Activated CD8-positive, alpha-beta T cell treated with anti-CD3 and anti-CD28 coated beads, Interleukin-2, amount 10 ng/mL, durations not matched to agents 7 days and 5 days (primary cell): ENCODE measurements at regions of chr20 and their contacts with region 1.

Region 1: DNA sequence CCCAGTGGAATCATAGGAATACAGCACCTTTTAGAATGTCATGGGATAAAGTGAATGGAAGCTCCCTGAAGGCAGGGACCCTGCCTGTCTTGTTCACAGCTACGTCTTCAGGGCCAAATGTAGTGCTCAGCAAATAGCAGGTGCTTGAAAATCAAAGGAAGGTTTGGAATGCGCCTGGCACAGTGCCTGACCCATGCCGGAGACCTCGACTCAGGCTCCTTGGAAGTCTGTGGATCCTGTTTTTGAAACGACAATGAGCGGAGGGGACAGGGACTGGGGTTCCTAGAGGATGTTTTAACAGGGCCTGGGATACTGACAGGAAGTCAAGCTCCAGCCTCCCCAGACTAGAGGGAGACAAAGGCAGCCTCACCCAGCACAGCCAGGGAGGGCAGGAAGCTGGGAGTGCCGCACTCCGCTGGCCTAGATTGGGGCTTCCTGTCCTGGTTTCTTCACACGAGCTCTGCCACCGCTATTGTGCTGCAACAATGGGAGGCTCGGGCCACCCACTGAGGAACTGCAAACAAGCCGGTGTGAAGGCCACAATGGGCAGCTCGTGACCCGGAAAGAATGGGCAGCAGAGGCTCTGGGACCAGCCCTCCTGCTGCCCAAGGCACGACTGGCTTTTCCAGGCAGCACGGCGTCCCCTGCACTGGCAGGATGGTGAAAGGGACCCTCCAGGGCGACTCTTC is 76.7 kb downstream of the PREX1 start:
- DNase-seq: peak; percentile 70
- ATAC-seq: peak; percentile 83
- H3K4me3 Mint-ChIP-seq: peak overlapping the region; percentile 42
- H3K27ac Mint-ChIP-seq: peak overlapping the region; percentile 87
- H3K4me1 Mint-ChIP-seq: peaks cover 78% of the 10 kb centered on the region
- H3K27me3 Mint-ChIP-seq: no peaks in the 10 kb centered on the region

Region 2: GRCh38 chr20:48738399-48739304 is 12.4 kb before region 1 on chr20:
- CTCF ChIA-PET with region 1: interaction called, 7 read pairs
- POLR2A ChIA-PET with region 1: interaction called, 19 read pairs
- DNase-seq: peak; percentile 91
- ATAC-seq: peak; percentile 87
- H3K4me3 Mint-ChIP-seq: peak overlapping the region; percentile 45
- H3K27ac Mint-ChIP-seq: peak overlapping the region; percentile 89
- H3K4me1 Mint-ChIP-seq: peaks cover 83% of the 10 kb centered on the region
- H3K27me3 Mint-ChIP-seq: no peaks in the 10 kb centered on the region

Region 3: DNA sequence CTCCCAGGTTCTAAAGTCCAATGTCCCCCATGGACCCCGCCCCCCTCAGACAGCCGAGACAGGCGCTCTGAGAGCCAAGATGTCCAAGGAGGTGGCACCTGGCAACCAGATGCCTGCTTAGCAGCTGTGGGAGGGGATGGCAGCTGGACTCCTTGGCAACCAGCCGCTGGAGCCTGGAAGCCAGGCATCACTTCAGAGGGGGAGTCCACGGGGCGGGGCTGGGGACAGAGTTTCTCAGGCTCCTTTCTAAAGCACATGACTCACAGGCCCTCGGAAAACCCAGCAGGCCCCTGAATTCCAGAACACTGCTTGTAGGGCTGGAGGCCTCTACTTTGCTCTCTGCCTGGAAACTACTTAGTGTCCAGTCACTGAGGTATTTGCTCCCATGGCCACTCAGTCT is 25.2 kb after region 1 on chr20:
- CTCF ChIA-PET with region 1: no interaction called
- POLR2A ChIA-PET with region 1: no interaction called
- DNase-seq: no peak
- ATAC-seq: no peak
- H3K4me3 Mint-ChIP-seq: no peak overlapping the region
- H3K27ac Mint-ChIP-seq: no peak overlapping the region
- H3K4me1 Mint-ChIP-seq: peaks cover 82% of the 10 kb centered on the region
- H3K27me3 Mint-ChIP-seq: no peaks in the 10 kb centered on the region